ENCODE measurements at regions of chr15 and their contacts with region 1.

Region 1: GRCh38 chr15:35078221-35078915 is 6.7 kb downstream of the NANOGP8 start:
- DNase-seq: peak; percentile 14
- H3K4me3 ChIP-seq: no peak overlapping the region
- CTCF ChIP-seq: peak; percentile 68

Region 2: DNA sequence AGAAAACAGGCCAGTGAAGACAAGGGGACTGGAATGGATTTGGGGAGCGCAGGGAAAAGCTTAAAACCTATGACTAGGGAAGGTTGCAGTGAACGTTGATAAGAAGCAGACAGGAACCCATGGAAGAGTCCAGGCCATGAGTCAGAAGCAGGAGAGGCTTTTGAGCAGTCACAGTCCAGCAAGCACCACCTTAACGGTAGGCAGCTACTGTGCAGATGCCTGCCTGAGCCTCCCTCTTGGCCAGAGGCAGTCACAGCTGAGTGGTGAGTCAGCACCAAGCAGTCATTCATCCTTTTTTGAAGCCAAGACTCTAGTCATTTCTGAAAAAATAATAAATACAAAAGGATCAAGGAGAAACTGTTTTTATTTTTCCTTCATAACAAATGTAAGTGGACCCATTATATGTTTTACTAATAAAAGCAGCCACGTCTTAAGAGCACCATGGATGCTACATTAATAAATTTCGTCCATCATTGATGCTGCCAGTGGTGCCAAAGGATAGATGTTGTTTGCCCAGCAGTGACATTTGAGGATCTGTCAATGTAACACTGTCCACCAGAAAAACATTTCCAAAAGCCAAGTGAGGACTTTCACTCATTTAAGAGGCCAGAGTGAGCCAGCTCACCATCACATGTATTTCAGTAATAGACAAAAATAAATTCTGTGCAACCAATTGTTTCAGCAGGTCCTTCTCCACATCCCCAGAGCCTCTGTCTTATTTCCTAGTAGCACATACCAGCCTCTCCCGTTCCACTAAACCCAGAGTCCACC is 240.9 kb before region 1 on chr15:
- CTCF ChIA-PET with region 1: no interaction called
- POLR2A ChIA-PET with region 1: no interaction called
- DNase-seq: no peak
- H3K4me3 ChIP-seq: no peak overlapping the region
- CTCF ChIP-seq: no peak

Region 3: DNA sequence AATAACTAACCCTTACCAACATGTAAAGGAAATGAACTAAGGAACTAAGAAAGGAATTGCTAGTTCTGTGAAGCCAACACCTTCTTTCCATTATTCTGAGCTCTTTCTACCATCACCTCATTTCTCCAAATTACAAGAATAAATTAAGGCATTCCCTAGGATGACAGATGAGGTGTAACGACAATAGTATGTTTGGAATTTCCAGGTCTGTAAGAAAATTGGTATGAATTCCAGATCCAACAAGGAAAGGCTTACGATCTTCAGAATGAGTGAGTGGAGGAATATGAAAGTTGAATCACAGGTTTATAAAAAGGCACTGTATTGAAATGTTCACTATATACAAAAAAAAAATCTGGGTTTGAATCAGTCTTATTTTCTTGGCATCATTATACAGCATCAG is 11.2 kb after region 1 on chr15:
- CTCF ChIA-PET with region 1: interaction called, 34 read pairs
- POLR2A ChIA-PET with region 1: no interaction called
- DNase-seq: no peak
- H3K4me3 ChIP-seq: no peak overlapping the region
- CTCF ChIP-seq: no peak

Region 4: GRCh38 chr15:35246451-35246850 is 168.1 kb after region 1 on chr15:
- CTCF ChIA-PET with region 1: no interaction called
- POLR2A ChIA-PET with region 1: no interaction called
- DNase-seq: no peak
- H3K4me3 ChIP-seq: no peak overlapping the region
- CTCF ChIP-seq: no peak

Region 5: GRCh38 chr15:35289024-35289617 is 210.8 kb after region 1 on chr15:
- CTCF ChIA-PET with region 1: interaction called, 37 read pairs
- POLR2A ChIA-PET with region 1: no interaction called
- DNase-seq: no peak
- H3K4me3 ChIP-seq: no peak overlapping the region
- CTCF ChIP-seq: peak; percentile 71

Region 6: GRCh38 chr15:35450492-35450891 is 372.1 kb after region 1 on chr15:
- CTCF ChIA-PET with region 1: interaction called, 101 read pairs
- POLR2A ChIA-PET with region 1: no interaction called
- DNase-seq: peak; percentile 59
- H3K4me3 ChIP-seq: no peak overlapping the region
- CTCF ChIP-seq: no peak

Region 7: DNA sequence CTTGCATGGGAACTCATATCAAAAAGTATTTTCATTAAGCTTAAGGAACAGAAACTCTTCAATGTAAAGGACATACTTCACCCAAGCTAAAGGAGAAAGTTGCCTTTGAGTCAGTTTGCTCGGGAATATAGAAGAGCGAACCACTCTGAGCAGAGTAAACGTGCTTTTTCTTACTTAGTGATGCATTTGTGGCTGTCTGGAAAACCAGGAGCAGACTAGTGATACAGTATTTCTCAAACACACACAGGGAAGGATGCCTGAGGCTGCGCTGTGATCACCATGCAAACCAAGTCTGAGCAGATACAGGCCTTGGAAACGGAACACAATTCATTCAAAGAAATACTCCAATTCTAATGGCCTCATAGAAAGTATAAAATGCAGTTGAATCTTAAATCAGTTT is 1380.0 kb after region 1 on chr15:
- CTCF ChIA-PET with region 1: no interaction called
- POLR2A ChIA-PET with region 1: no interaction called
- DNase-seq: no peak
- H3K4me3 ChIP-seq: no peak overlapping the region
- CTCF ChIP-seq: no peak